Stomach (tissue), 19 donors: ENCODE measurements at regions of chr11 and their contacts with region 1.

Region 1: GRCh38 chr11:114059278-114059983 is at the start of gene ZBTB16:
- DNase-seq: peak; percentile 86 to 93
- H3K4me3 ChIP-seq: peak within 1 kb of the TSS; percentile 93 to 97 (median 96)
- H3K27ac ChIP-seq: peak within 1 kb of the TSS; percentile 94 to 99 (median 97)
- H3K4me1 ChIP-seq: peaks cover 43 to 62% (median 45%) of the 10 kb centered on the region in 4 donors
- H3K27me3 ChIP-seq: peaks cover 0 to 32% (median 0%) of the 10 kb centered on the region in 3 donors
- CTCF ChIP-seq: peak in 3 of 7 experiments; percentile 33 to 45 (median 36)
- EP300 ChIP-seq: no peak
- POLR2A ChIP-seq: peak in 2 of 4 donors; percentile 68 to 70
- total RNA-seq, gene ZBTB16: 30.1 to 318 (median 137) TPM

Region 2: DNA sequence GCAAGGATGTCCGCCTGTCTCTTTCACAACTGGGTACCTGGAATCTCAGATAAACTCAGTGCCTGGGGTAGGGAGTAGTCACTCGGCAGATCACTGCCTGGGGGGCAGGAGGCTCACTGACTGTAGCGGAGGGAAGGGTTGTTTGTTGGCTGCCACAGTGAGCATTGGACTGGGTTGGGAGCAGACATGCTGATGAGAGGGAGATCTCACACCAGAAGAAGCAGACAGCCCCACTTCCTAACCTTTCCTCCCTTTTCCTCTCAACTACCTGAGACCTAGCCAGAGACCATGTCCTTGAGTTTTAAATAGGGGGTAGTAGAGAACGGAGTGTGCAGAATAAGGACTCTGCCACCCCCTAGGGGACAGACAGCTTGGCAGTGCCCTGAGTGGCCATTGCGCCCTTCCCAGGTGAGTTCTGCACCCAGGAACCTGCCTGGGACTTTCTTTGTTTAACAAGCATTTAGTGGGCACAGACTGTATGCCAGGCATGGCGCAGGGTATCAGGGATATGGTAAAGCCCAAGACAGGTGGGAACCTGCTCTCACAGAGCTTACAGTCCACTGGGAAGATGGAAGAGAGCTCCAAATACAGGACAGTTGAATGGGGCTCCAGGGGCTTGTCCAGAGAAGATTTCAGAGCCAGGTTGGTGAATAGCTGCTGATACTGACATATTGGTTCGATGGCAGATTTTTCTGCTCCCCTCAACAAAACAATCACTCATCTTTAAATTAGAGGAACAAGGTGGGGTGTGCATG is 121.0 kb after region 1 on chr11:
- intact Hi-C with region 1: loop called (anchors 10 kb)
- DNase-seq: peak; percentile 75 to 77
- H3K4me3 ChIP-seq: peak overlapping the region; percentile 18 to 27 (median 26)
- H3K27ac ChIP-seq: peak overlapping the region; percentile 88 to 99 (median 95)
- H3K4me1 ChIP-seq: peaks cover 76 to 98% (median 83%) of the 10 kb centered on the region in 4 donors
- H3K27me3 ChIP-seq: no peaks in the 10 kb centered on the region
- CTCF ChIP-seq: peak in 5 of 7 experiments; percentile 47 to 81 (median 61)
- EP300 ChIP-seq: no peak
- POLR2A ChIP-seq: no peak

Region 3: GRCh38 chr11:114257621-114258558 is 198.5 kb after region 1 on chr11:
- intact Hi-C with region 1: loop called (anchors 10 kb)
- DNase-seq: peak in 1 of 2 donors; percentile 79
- H3K4me3 ChIP-seq: peak overlapping the region in 3 of 4 donors; percentile 0 to 11 (median 7)
- H3K27ac ChIP-seq: peak overlapping the region in 4 of 5 donors; percentile 65 to 84 (median 70)
- H3K4me1 ChIP-seq: peaks cover 37 to 65% (median 56%) of the 10 kb centered on the region in 4 donors
- H3K27me3 ChIP-seq: no peaks in the 10 kb centered on the region
- CTCF ChIP-seq: peak in 1 of 7 experiments; percentile 13
- EP300 ChIP-seq: no peak
- POLR2A ChIP-seq: no peak